Activated naive CD4-positive, alpha-beta T cell treated with anti-CD3 and anti-CD28 coated beads for 36 hours (primary cell): ENCODE measurements at regions of chr5 and their contacts with region 1.

Region 1: DNA sequence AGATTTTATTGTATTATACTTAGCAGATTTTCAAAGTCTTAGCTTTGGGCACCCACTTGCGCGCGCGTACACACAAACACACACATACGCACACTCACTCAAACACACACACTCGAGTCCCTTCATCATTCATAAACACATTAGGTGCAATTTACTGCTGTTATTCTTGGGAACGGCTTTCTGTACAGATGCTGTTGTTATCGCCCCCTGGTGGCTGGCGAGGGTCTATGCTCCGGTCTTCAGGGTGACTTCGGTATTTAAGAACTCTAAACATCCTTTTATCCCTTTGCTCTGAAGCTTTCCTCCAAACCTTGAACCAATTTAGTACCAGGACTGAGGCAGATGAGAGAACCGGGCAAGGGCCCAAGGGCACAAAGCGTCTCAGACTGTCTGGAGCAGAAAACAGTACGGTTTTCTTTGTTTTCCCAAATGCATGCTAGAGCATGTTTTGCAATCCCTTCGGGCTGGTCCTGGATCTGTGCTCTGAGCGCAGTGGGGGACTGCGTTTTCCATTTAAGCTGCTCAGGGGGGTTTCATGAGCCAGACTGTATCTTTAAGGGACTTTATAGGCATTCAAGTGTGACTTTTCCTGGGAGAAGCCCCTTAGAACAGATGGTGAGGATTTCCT is 1.7 kb upstream of the SLIT3 start:
- DNase-seq: peak; percentile 79
- H3K4me3 Mint-ChIP-seq: no peak overlapping the region
- H3K27ac Mint-ChIP-seq: no peak overlapping the region
- H3K4me1 Mint-ChIP-seq: peaks cover 14% of the 10 kb centered on the region
- H3K27me3 Mint-ChIP-seq: peaks cover 51% of the 10 kb centered on the region

Region 2: GRCh38 chr5:168706655-168707069 is 595.9 kb before region 1 on chr5:
- CTCF ChIA-PET with region 1: no interaction called
- intact Hi-C with region 1: loop called (anchors 2 kb)
- DNase-seq: peak; percentile 55
- H3K4me3 Mint-ChIP-seq: no peak overlapping the region
- H3K27ac Mint-ChIP-seq: no peak overlapping the region
- H3K4me1 Mint-ChIP-seq: no peaks in the 10 kb centered on the region
- H3K27me3 Mint-ChIP-seq: no peaks in the 10 kb centered on the region

Region 3: DNA sequence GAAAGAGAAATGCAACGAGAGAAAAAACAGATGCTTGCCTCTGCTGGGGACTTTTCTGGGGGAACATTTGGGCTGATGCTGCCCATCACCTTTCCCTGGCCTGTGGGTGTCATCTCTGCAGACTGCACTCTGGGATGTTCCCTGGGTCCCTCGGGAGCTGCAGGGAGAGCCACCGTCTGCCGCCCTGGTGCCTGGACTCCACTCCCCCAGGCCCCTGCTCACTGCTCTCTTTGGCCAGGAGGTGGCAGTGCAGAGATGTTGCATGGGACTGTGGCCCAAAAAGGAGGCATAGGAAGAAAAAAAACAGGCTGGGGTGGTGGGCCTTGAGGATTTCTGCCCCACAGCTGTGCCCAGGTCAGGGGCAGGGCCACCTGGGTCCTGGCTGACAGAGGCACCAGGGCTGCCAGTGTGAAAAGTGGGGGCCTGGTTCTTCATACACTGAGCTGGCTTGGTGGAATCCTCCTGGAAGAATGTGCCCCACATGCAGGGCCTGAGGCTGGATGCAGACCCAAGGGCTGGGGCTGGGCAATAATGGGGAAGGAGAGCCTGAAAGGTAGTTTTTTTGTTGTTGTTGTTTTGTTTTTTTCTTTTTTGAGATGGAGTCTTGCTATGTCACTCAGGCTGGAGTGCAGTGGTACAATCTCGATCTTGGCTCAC is 355.3 kb before region 1 on chr5:
- CTCF ChIA-PET with region 1: no interaction called
- intact Hi-C with region 1: loop called (anchors 1 kb)
- DNase-seq: peak; percentile 62
- H3K4me3 Mint-ChIP-seq: no peak overlapping the region
- H3K27ac Mint-ChIP-seq: no peak overlapping the region
- H3K4me1 Mint-ChIP-seq: no peaks in the 10 kb centered on the region
- H3K27me3 Mint-ChIP-seq: no peaks in the 10 kb centered on the region

Region 4: GRCh38 chr5:168987543-168988300 is 314.9 kb before region 1 on chr5:
- CTCF ChIA-PET with region 1: interaction called, 4 read pairs
- intact Hi-C with region 1: loop called (anchors 1 kb)
- DNase-seq: peak; percentile 77
- H3K4me3 Mint-ChIP-seq: no peak overlapping the region
- H3K27ac Mint-ChIP-seq: no peak overlapping the region
- H3K4me1 Mint-ChIP-seq: no peaks in the 10 kb centered on the region
- H3K27me3 Mint-ChIP-seq: peaks cover 6% of the 10 kb centered on the region